Left ventricle myocardium superior (tissue), 1 donor: ENCODE measurements at regions of chr4 and their contacts with region 1.

Region 1: DNA sequence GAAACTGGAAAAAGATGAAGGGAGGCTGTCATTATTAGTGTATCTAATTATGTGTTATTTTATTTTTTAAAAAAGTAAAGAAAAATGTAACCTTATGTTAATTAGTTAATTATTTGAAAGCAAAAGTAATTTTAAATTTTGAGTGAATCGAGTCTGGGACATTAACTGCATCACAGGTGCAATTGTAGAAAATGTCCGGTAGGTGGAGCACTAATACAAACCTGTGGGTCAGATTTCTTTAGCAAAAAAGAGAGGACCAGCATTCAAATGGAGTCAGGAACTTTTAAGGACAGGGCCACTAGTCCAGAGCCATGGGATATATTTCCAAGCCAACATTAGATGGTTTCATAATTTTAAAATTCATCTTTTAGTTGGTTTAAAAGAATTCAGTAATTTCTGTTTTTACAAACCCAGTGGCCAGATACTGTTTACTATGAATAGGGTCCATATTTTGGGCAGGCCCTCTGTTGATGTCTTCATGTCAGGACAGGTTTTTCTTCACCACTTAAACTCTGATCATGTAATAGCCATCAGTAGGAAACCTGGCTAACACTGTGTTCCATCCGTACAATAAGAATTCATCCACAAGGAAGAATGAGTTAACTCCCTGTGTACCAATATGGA is 27.2 kb downstream of the BST1 start:
- DNase-seq: no peak
- ATAC-seq: peak; percentile 45

Region 2: GRCh38 chr4:15756361-15756861 is 26.4 kb after region 1 on chr4:
- intact Hi-C with region 1: no loop called
- DNase-seq: no peak
- ATAC-seq: no peak

Region 3: GRCh38 chr4:15956179-15956850 is 226.3 kb after region 1 on chr4:
- intact Hi-C with region 1: loop called (anchors 10 kb)
- DNase-seq: peak; percentile 75
- ATAC-seq: peak; percentile 89